AG04449 (cell line): ENCODE measurements at regions of chr2 and their contacts with region 1.

Region 1: GRCh38 chr2:56749152-56749752 is 565.5 kb downstream of the CCDC85A start:
- DNase-seq: peak; percentile 21
- H3K4me3 ChIP-seq: no peak overlapping the region
- CTCF ChIP-seq: peak; percentile 22

Region 2: DNA sequence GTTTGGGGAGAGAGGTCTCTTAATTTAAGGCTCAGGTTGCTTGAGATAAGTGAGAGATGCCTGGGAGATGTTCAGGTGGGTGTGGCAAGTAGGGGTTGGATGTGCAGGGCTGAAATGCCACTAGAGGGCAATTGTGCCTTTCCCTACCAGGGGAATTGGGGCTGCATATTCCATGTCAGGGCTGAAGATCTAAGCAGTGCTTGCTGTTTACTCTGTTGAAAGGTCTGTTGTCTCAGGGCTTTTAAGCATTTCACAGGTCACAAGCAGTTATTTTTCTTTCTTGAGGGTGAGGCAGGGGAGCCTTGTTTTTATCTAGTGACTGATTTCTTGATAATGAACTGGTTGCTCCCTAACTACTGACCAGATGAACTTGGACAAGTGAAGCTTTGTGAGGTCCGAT is 557.6 kb before region 1 on chr2:
- CTCF ChIA-PET with region 1: interaction called, 23 read pairs
- POLR2A ChIA-PET with region 1: no interaction called
- DNase-seq: no peak
- H3K4me3 ChIP-seq: no peak overlapping the region
- CTCF ChIP-seq: peak; percentile 82

Region 3: DNA sequence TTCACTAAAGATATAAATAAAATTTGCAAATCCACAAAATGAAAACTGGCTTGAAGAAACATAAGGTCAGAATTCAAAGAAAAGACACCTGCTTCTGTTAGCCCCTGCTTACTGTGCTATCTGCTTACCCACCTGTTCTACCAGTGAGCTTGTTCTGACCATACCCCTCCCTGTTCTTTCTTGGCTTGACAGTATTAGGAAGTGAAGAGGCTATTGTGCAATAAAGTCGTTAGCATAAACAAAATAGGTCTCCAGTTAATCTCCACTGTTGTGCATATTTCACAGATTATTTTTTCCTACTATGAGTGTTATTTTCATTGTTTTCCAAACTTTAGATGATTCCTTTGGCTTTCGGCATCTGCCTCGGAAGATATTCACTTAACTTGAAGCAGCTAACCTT is 243.4 kb before region 1 on chr2:
- CTCF ChIA-PET with region 1: no interaction called
- POLR2A ChIA-PET with region 1: no interaction called
- DNase-seq: no peak
- H3K4me3 ChIP-seq: no peak overlapping the region
- CTCF ChIP-seq: no peak

Region 4: GRCh38 chr2:56770490-56770889 is 21.2 kb after region 1 on chr2:
- CTCF ChIA-PET with region 1: no interaction called
- POLR2A ChIA-PET with region 1: no interaction called
- DNase-seq: peak; percentile 37
- H3K4me3 ChIP-seq: no peak overlapping the region
- CTCF ChIP-seq: no peak